ENCODE measurements at regions of chr20 and their contacts with region 1.

Region 1: DNA sequence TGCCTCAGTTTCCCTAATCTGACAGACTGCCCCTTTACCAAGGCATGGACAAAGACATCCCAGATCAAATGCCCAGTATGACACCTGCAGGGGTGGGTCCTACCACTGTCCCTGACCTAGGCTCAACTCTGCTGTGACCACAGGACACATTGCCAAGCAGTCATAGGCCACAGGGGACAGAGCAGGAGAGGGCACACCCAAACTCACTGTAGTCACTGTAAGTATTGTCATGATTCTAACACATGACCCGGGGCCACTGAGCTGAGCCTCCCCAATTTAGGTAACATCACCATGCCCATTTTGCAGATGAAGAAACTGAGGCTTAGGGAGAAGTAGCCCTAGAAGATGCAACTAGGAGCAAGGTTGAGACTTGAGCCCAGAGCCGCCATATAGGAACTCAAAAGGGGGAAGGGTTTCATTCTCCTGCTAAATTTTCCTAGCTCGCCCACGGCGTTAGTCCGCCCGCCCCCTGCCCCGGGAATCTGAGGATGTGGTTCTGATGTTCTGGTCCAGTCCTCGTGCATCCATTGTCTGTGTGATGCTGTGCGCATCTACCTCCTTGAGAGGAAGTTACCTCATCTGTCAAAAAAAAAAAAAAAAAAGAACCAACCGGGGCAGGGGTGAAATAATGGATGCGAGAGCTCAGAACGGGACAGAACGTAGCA is 44.8 kb downstream of the PMEPA1 start:
- DNase-seq: peak in 1 of 2 donors; percentile 1
- H3K4me3 ChIP-seq: no peak overlapping the region
- H3K27ac ChIP-seq: no peak overlapping the region
- H3K4me1 ChIP-seq: peaks cover 32% of the 10 kb centered on the region in 2 donors
- H3K27me3 ChIP-seq: no peaks in the 10 kb centered on the region
- CTCF ChIP-seq: no peak
- POLR2A ChIP-seq: no peak

Region 2: GRCh38 chr20:57480444-57481160 is 184.5 kb before region 1 on chr20:
- intact Hi-C with region 1: no loop called
- DNase-seq: no peak
- H3K4me3 ChIP-seq: no peak overlapping the region
- H3K27ac ChIP-seq: no peak overlapping the region
- H3K4me1 ChIP-seq: no peaks in the 10 kb centered on the region
- H3K27me3 ChIP-seq: no peaks in the 10 kb centered on the region
- CTCF ChIP-seq: no peak
- POLR2A ChIP-seq: no peak

Region 3: DNA sequence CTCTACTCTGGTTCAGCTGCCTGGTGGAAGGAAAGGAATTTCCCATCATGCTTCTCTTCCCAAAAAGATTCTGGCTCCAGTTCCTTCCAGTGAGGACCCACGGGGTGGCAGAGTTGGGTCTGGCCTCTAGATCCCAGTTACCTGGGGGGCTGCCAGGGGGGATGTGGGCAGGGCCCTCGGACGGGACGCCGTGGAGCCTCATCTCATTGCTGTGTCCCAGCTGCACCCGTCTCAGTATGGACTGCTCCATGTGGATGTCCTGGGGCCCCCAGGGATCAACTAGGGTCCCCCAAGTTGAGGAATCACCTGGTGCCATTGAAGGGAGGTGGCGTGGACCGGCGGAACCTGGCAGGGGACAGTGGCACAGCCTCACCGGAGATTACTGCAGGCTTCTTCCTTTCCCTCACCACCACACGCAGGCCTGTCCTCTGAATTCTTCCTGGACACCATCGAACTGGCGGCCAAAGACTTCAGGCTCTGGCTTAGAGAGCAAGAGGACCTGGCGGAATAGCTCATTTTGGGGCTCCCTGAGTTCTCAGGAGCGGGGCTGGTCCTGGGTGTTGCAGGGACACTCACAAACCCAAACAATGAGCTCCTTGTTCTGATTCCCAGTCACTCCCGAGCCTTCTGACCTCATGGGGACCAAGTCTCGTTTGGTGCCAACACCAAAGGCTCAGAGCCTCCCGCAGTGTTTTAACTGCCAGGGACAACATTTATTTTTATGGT is 53.3 kb before region 1 on chr20:
- intact Hi-C with region 1: no loop called
- DNase-seq: no peak
- H3K4me3 ChIP-seq: no peak overlapping the region
- H3K27ac ChIP-seq: no peak overlapping the region
- H3K4me1 ChIP-seq: no peaks in the 10 kb centered on the region
- H3K27me3 ChIP-seq: no peaks in the 10 kb centered on the region
- CTCF ChIP-seq: no peak
- POLR2A ChIP-seq: no peak

Region 4: GRCh38 chr20:57709931-57710799 is 45.1 kb after region 1 on chr20 and contains the start of gene PMEPA1:
- intact Hi-C with region 1: loop called (anchors 5 kb)
- DNase-seq: peak; percentile 95 to 96
- H3K4me3 ChIP-seq: peak within 1 kb of the TSS; percentile 70 to 99 (median 87)
- H3K27ac ChIP-seq: peak within 1 kb of the TSS; percentile 92 to 94 (median 94)
- H3K4me1 ChIP-seq: peaks cover 23 to 54% of the 10 kb centered on the region in 2 donors
- H3K27me3 ChIP-seq: no peaks in the 10 kb centered on the region
- CTCF ChIP-seq: peak in 2 of 6 experiments; percentile 14 to 35
- POLR2A ChIP-seq: peak; percentile 48 to 96
- total RNA-seq, gene PMEPA1: 6.5 to 12.6 (median 8.3) TPM

Measured in thyroid gland (tissue), 4 donors.